Activated CD4-positive, alpha-beta memory T cell treated with anti-CD3 and anti-CD28 coated beads for 36 hours (primary cell): ENCODE measurements at regions of chrX and their contacts with region 1.

Region 1: GRCh38 chrX:31178064-31178768 is 106.4 kb upstream of the FTHL17 start:
- DNase-seq: no peak
- H3K4me3 Mint-ChIP-seq: no peak overlapping the region
- H3K27ac Mint-ChIP-seq: no peak overlapping the region
- H3K4me1 Mint-ChIP-seq: peaks cover 6% of the 10 kb centered on the region
- H3K27me3 Mint-ChIP-seq: no peaks in the 10 kb centered on the region

Region 2: GRCh38 chrX:31061091-31061490 is 117.1 kb before region 1 on chrX:
- CTCF ChIA-PET with region 1: no interaction called
- POLR2A ChIA-PET with region 1: no interaction called
- intact Hi-C with region 1: loop called (anchors 1 kb)
- DNase-seq: no peak
- H3K4me3 Mint-ChIP-seq: no peak overlapping the region
- H3K27ac Mint-ChIP-seq: no peak overlapping the region
- H3K4me1 Mint-ChIP-seq: peaks cover 10% of the 10 kb centered on the region
- H3K27me3 Mint-ChIP-seq: no peaks in the 10 kb centered on the region